GM10248 (cell line): ENCODE measurements at regions of chr4 and their contacts with region 1.

Region 1: GRCh38 chr4:57200928-57201327 is 90.7 kb upstream of the IGFBP7 start:
- DNase-seq: no peak
- CTCF ChIP-seq: no peak

Region 2: DNA sequence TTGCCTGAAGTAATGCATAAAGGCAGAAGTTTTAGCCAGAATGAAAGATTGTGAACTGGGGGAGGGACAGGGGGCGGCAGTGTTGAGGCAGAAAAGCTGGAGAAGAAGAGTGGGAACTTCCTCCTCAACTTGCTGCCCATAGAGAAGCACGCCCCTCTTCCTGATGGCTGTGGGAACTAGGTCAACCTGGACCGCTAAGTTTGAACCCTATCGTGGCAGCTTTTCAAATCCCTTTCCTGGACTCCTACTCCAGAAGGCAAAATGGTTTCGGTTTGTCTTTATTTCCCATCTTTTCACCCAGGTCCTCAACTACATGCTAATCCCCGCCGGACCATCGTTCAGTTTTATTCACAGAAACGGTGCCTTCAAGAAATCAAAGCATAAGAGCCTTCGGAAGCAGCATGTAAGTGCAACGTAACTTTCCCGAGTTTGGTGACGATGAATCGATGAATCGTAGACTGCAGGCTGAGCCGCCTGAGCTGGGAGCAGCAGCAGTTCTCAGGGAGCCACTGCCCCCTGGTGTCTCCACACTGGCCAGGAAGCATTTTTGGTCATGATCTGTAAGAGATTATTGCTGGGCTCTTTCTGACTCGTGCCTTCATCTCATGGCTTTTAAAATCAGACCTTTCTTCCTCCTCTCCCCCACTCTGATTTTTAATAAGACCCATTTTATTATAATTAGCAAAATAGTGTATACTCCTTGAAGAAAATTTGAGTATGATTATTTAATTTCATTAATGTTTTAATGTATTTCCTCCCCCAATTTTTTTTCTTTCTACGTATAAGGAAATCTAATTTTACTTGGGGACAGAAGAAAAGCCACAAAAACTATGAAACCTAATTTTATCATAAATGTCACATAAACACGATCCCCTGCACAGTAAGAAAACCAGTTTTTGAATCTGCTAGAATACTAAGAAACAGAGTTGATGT is 400.8 kb before region 1 on chr4:
- CTCF ChIA-PET with region 1: no interaction called
- POLR2A ChIA-PET with region 1: no interaction called
- DNase-seq: peak; percentile 78
- CTCF ChIP-seq: peak; percentile 89

Region 3: GRCh38 chr4:57190601-57191481 is 10.1 kb before region 1 on chr4:
- CTCF ChIA-PET with region 1: interaction called, 29 read pairs
- POLR2A ChIA-PET with region 1: no interaction called
- DNase-seq: peak; percentile 36
- CTCF ChIP-seq: peak; percentile 51